Naive thymus-derived CD4-positive, alpha-beta T cell (primary cell): ENCODE measurements at regions of chr5 and their contacts with region 1.

Region 1: DNA sequence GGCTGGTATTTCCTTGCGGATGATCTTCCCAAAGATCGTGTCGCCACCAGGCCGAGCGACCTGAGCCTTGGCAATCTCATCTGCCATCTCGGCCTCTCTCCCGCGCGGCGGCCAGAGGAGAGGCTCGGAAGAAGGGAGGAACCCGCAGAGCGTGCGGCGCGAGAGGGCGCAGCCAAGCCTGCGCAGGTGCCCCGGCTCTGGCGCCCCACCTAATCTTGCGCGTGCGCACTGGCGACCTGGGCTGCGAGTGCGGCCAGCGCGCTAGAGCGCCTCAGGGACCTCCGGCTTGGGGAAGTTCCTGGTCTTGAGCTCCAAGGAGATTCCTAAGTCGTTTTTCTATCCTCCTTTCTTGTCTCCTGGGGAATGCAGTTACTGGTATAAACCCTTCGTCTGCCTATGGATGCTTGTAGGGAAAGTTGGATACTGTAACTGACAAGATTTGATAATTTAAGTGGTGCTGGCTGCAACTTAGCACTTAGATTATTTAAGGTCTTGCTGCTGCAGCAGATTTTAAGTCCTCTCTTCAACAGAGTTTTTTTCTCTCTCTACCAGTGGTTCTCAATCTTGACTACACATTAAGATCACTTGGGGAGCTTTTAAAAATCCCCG is at the start of gene HINT1:
- DNase-seq: peak; percentile 86 to 98 (median 93)
- ATAC-seq: peak; percentile 89
- H3K4me3 ChIP-seq: peak within 1 kb of the TSS; percentile 97
- H3K4me3 Mint-ChIP-seq: peak within 1 kb of the TSS; percentile 93 to 98 (median 97)
- H3K27ac ChIP-seq: peak within 1 kb of the TSS; percentile 91
- H3K27ac Mint-ChIP-seq: peak within 1 kb of the TSS; percentile 95 to 99 (median 98)
- H3K4me1 ChIP-seq: peaks cover 15 to 23% of the 10 kb centered on the region in 2 donors
- H3K4me1 Mint-ChIP-seq: peaks cover 28 to 74% (median 61%) of the 10 kb centered on the region in 7 donors
- H3K27me3 ChIP-seq: no peaks in the 10 kb centered on the region
- H3K27me3 Mint-ChIP-seq: no peaks in the 10 kb centered on the region
- total RNA-seq, gene HINT1: 172 to 319 (median 233) TPM

Region 2: GRCh38 chr5:131252824-131253171 is 87.6 kb after region 1 on chr5:
- CTCF ChIA-PET with region 1: interaction called, 4 read pairs
- POLR2A ChIA-PET with region 1: interaction called, 10 read pairs
- intact Hi-C with region 1: loop called (anchors 1 kb)
- DNase-seq: peak; percentile 41 to 90 (median 87)
- ATAC-seq: peak; percentile 93
- H3K4me3 ChIP-seq: peak overlapping the region; percentile 72
- H3K4me3 Mint-ChIP-seq: peak overlapping the region; percentile 80 to 97 (median 96)
- H3K27ac ChIP-seq: peak overlapping the region; percentile 78
- H3K27ac Mint-ChIP-seq: peak overlapping the region; percentile 91 to 97 (median 95)
- H3K4me1 ChIP-seq: peaks cover 51 to 54% of the 10 kb centered on the region in 2 donors
- H3K4me1 Mint-ChIP-seq: peaks cover 62 to 89% (median 67%) of the 10 kb centered on the region in 7 donors
- H3K27me3 ChIP-seq: no peaks in the 10 kb centered on the region
- H3K27me3 Mint-ChIP-seq: no peaks in the 10 kb centered on the region

Region 3: GRCh38 chr5:131357739-131358561 is 192.7 kb after region 1 on chr5:
- CTCF ChIA-PET with region 1: interaction called, 3 read pairs
- POLR2A ChIA-PET with region 1: interaction called, 4 read pairs
- intact Hi-C with region 1: loop called (anchors 1 kb)
- DNase-seq: peak in 6 of 9 donors; percentile 23 to 52 (median 40)
- ATAC-seq: peak; percentile 73
- H3K4me3 ChIP-seq: no peak overlapping the region
- H3K4me3 Mint-ChIP-seq: peak overlapping the region; percentile 14 to 75 (median 56)
- H3K27ac ChIP-seq: peak overlapping the region; percentile 58
- H3K27ac Mint-ChIP-seq: peak overlapping the region; percentile 82 to 93 (median 86)
- H3K4me1 ChIP-seq: peaks cover 37 to 41% of the 10 kb centered on the region in 2 donors
- H3K4me1 Mint-ChIP-seq: peaks cover 32 to 83% (median 75%) of the 10 kb centered on the region in 7 donors
- H3K27me3 ChIP-seq: no peaks in the 10 kb centered on the region
- H3K27me3 Mint-ChIP-seq: no peaks in the 10 kb centered on the region

Region 4: GRCh38 chr5:131394128-131394527 is 228.9 kb after region 1 on chr5:
- CTCF ChIA-PET with region 1: interaction called, 4 read pairs
- POLR2A ChIA-PET with region 1: interaction called, 3 read pairs
- intact Hi-C with region 1: loop called (anchors 1 kb)
- DNase-seq: peak in 8 of 9 donors; percentile 36 to 84 (median 77)
- ATAC-seq: peak; percentile 97
- H3K4me3 ChIP-seq: no peak overlapping the region
- H3K4me3 Mint-ChIP-seq: peak overlapping the region in 9 of 10 donors; percentile 30 to 85 (median 69)
- H3K27ac ChIP-seq: peak overlapping the region; percentile 84
- H3K27ac Mint-ChIP-seq: peak overlapping the region; percentile 88 to 97 (median 91)
- H3K4me1 ChIP-seq: peaks cover 59 to 61% of the 10 kb centered on the region in 2 donors
- H3K4me1 Mint-ChIP-seq: peaks cover 28 to 95% (median 84%) of the 10 kb centered on the region in 7 donors
- H3K27me3 ChIP-seq: no peaks in the 10 kb centered on the region
- H3K27me3 Mint-ChIP-seq: no peaks in the 10 kb centered on the region

Region 5: DNA sequence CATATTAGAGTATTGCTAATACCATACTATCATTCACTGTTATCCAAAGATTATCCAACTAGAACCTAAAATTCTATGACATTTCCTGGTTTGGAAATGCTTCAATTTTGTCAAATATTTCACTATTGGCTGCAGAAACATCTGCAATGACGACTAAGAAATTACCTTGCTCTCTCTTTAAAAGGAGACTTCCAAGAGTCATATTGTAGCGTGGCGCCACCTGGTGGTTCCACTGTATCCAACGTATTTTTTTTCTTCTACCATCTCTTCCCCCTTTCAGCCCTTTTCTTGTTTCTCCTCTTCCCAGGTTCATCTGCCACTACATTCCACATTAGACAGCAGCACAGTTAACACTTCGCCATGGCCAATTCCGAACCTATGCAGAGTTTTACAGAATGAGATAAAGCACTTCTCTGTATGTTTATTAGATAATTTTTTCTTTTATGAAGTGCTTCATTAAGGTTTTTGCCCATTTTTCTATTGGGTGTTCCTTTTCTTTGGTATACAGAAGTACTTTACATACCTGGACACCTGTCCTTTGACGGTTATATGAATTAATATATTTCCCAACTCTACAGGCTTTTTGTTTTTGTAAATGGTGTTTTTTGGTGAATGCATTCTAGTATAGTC is 252.1 kb after region 1 on chr5:
- CTCF ChIA-PET with region 1: interaction called, 5 read pairs
- POLR2A ChIA-PET with region 1: interaction called, 5 read pairs
- intact Hi-C with region 1: loop called (anchors 1 kb)
- DNase-seq: peak; percentile 61 to 78 (median 74)
- ATAC-seq: peak; percentile 81
- H3K4me3 ChIP-seq: no peak overlapping the region
- H3K4me3 Mint-ChIP-seq: peak overlapping the region in 7 of 10 donors; percentile 27 to 70 (median 45)
- H3K27ac ChIP-seq: peak overlapping the region; percentile 23
- H3K27ac Mint-ChIP-seq: peak overlapping the region; percentile 68 to 95 (median 81)
- H3K4me1 ChIP-seq: peaks cover 8 to 14% of the 10 kb centered on the region in 2 donors
- H3K4me1 Mint-ChIP-seq: peaks cover 17 to 52% (median 46%) of the 10 kb centered on the region in 7 donors
- H3K27me3 ChIP-seq: no peaks in the 10 kb centered on the region
- H3K27me3 Mint-ChIP-seq: no peaks in the 10 kb centered on the region